ENCODE measurements at regions of chr4 and their contacts with region 1.

Region 1: GRCh38 chr4:15729910-15730533 is 27.2 kb downstream of the BST1 start:
- DNase-seq: no peak
- ATAC-seq: no peak
- H3K4me3 Mint-ChIP-seq: no peak overlapping the region
- H3K27ac Mint-ChIP-seq: no peak overlapping the region
- H3K4me1 Mint-ChIP-seq: no peaks in the 10 kb centered on the region
- H3K27me3 Mint-ChIP-seq: no peaks in the 10 kb centered on the region
- CTCF ChIP-seq: peak; percentile 45

Region 2: DNA sequence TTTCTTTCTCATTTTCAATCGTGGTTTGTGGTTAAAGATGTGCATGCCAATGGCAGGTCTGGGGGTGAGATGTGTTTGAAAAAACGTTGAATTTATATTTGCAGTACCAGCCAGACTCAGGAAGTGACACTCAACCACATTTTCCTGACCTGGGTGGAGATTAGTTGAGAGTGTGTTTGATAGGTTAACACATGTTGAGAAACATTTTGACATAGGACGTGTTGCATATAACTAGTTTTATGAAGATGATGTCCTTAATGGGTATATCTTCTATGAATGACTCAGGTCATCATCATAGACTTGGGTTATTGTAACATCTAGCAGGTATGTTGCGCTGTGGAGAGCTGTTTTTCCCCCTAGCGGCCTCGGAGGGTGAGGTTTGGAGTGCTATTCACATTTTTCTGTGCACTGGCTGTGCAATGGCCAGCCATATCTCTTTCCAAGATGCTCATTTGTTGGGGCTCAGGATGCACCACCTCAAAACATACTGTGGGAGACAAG is 26.4 kb after region 1 on chr4:
- CTCF ChIA-PET with region 1: interaction called, 5 read pairs
- POLR2A ChIA-PET with region 1: no interaction called
- intact Hi-C with region 1: loop called (anchors 1 kb)
- DNase-seq: no peak
- ATAC-seq: peak; percentile 84
- H3K4me3 Mint-ChIP-seq: peak overlapping the region; percentile 44
- H3K27ac Mint-ChIP-seq: no peak overlapping the region
- H3K4me1 Mint-ChIP-seq: peaks cover 34% of the 10 kb centered on the region
- H3K27me3 Mint-ChIP-seq: no peaks in the 10 kb centered on the region
- CTCF ChIP-seq: peak; percentile 8

Region 3: GRCh38 chr4:15956179-15956850 is 226.3 kb after region 1 on chr4:
- CTCF ChIA-PET with region 1: interaction called, 9 read pairs
- POLR2A ChIA-PET with region 1: no interaction called
- intact Hi-C with region 1: loop called (anchors 1 kb)
- DNase-seq: peak; percentile 56
- ATAC-seq: peak; percentile 100
- H3K4me3 Mint-ChIP-seq: no peak overlapping the region
- H3K27ac Mint-ChIP-seq: no peak overlapping the region
- H3K4me1 Mint-ChIP-seq: peaks cover 5% of the 10 kb centered on the region
- H3K27me3 Mint-ChIP-seq: no peaks in the 10 kb centered on the region
- CTCF ChIP-seq: no peak

Region 4: GRCh38 chr4:16001484-16001858 is 271.4 kb after region 1 on chr4:
- CTCF ChIA-PET with region 1: interaction called, 4 read pairs
- POLR2A ChIA-PET with region 1: no interaction called
- intact Hi-C with region 1: loop called (anchors 1 kb)
- DNase-seq: peak; percentile 24
- ATAC-seq: peak; percentile 88
- H3K4me3 Mint-ChIP-seq: no peak overlapping the region
- H3K27ac Mint-ChIP-seq: no peak overlapping the region
- H3K4me1 Mint-ChIP-seq: no peaks in the 10 kb centered on the region
- H3K27me3 Mint-ChIP-seq: no peaks in the 10 kb centered on the region
- CTCF ChIP-seq: no peak

Measured in activated B cell treated with CpG ODN at 0.5 μM for 24 hours (primary cell).